PC-3 (cell line): ENCODE measurements at regions of chr14 and their contacts with region 1.

Region 1: DNA sequence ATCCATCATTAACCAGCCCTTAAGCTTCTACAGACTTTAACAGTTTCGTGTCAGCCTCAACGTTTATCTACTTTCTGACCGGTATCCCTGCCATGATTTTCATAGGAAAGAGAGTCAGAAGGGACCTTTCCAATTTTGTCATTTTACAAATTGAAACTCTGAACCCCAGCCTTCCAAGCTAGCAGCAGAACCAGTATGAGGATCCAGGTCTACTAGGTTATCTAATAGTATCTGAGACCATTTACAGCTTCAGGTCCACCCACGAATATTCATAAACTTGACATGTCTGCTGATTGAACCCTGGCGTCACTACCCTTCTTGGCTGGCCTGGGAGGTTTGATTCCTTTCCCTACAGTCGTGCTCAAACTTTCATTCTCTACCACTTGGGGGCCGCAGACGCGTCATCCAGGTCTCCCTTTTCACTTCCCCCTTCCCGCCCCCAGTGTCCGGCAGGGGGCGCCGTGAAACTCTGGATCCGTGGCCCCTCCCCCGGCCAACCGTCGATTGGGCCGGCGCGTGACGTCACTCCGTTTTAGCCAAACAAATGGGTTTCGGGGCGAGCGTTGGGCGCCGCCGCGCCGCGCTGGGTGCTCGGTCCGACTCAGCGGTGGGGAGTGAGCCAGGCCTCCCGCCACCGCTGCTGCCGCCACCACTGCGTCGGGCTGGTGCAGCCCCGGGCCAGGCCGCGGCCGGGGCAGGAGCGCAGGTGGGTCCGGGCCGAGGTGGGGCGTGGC is at the start of gene FBXO34:
- DNase-seq: peak; percentile 100
- ATAC-seq: peak; percentile 89
- H3K4me3 ChIP-seq: peak within 1 kb of the TSS; percentile 94
- H3K27ac ChIP-seq: peak within 1 kb of the TSS; percentile 15
- H3K4me1 ChIP-seq: peaks cover 33% of the 10 kb centered on the region
- H3K27me3 ChIP-seq: no peaks in the 10 kb centered on the region
- CTCF ChIP-seq: peak; percentile 100
- total RNA-seq, gene FBXO34: 33.6 and 35.9 TPM in 2 replicates

Region 2: GRCh38 chr14:55212634-55213033 is 58.4 kb before region 1 on chr14:
- CTCF ChIA-PET with region 1: no interaction called
- POLR2A ChIA-PET with region 1: no interaction called
- intact Hi-C with region 1: loop called (anchors 1 kb)
- DNase-seq: no peak
- ATAC-seq: peak; percentile 12; the same call in 1 of the 2 replicates
- H3K4me3 ChIP-seq: no peak overlapping the region
- H3K27ac ChIP-seq: no peak overlapping the region
- H3K4me1 ChIP-seq: no peaks in the 10 kb centered on the region
- H3K27me3 ChIP-seq: 0 out of 2 replicates have a peak, but pooled peaks cover under 1% of the 10 kb centered on the region
- CTCF ChIP-seq: no peak

Region 3: GRCh38 chr14:55228261-55228660 is 42.7 kb before region 1 on chr14:
- CTCF ChIA-PET with region 1: no interaction called
- POLR2A ChIA-PET with region 1: no interaction called
- intact Hi-C with region 1: no loop called
- DNase-seq: no peak
- ATAC-seq: no peak
- H3K4me3 ChIP-seq: no peak overlapping the region
- H3K27ac ChIP-seq: no peak overlapping the region
- H3K4me1 ChIP-seq: no peaks in the 10 kb centered on the region
- H3K27me3 ChIP-seq: peaks cover 2% of the 10 kb centered on the region
- CTCF ChIP-seq: no peak

Region 4: GRCh38 chr14:55354500-55354899 is 83.5 kb after region 1 on chr14:
- CTCF ChIA-PET with region 1: interaction called, 4 read pairs
- POLR2A ChIA-PET with region 1: no interaction called
- intact Hi-C with region 1: loop called (anchors 1 kb)
- DNase-seq: peak; percentile 63
- ATAC-seq: peak; percentile 43
- H3K4me3 ChIP-seq: no peak overlapping the region
- H3K27ac ChIP-seq: peak overlapping the region; percentile 86
- H3K4me1 ChIP-seq: peaks cover 61% of the 10 kb centered on the region
- H3K27me3 ChIP-seq: no peaks in the 10 kb centered on the region
- CTCF ChIP-seq: peak; percentile 86

Region 5: DNA sequence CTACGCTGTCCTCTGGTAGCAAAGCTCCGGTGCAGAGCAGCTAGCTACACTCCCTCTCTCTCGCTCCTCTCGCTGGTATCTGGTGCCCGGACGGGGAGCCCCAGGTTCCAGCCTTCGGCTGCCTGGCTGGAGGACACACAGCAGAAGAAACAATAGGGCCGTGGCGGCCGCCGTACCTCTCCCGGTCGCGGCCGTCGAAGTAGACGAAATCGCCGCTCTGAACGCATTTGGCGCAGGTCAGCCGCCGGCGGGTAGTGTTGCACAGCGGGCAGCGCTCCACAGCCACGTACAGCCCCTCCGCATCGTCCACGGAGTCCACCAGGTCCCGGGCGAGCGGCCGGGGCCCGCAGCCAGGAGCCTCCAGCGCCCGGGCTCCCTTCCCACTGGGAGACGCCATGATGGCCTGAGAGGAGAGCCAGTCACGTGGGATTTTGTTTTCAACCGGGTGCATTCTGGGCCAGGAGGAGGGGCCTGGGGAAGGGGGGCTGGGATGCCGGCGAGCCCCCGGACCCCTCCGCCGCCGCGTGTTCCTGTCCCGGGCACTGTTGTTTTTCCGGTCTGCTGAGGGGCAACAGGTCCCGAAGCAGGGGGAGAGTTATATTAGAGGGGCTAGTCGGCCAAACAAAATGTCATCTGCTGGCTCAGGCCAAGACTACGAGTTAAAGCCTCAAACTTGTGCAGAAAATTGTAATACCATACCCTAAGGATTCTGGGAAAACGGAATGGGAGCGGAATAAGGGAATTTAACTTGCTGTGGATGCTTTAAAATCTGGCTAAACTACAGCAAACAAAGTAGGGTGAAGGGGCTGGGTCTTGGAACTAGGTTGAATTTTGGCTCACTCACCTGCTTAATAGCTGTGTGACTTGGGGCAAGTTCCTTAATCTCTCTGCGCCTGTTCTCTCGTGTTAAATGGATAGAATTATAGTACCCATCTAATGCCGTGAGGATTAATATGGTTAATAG is 140.7 kb after region 1 on chr14 and contains the start of gene ATG14:
- CTCF ChIA-PET with region 1: interaction called, 4 read pairs
- POLR2A ChIA-PET with region 1: no interaction called
- intact Hi-C with region 1: loop called (anchors 1 kb)
- DNase-seq: peak; percentile 94
- ATAC-seq: peak; percentile 93
- H3K4me3 ChIP-seq: peak within 1 kb of the TSS; percentile 80
- H3K27ac ChIP-seq: peak within 1 kb of the TSS; percentile 71
- H3K4me1 ChIP-seq: peaks cover 33% of the 10 kb centered on the region
- H3K27me3 ChIP-seq: no peaks in the 10 kb centered on the region
- CTCF ChIP-seq: no peak
- total RNA-seq, gene ATG14: 20.2 and 22.5 TPM in 2 replicates

Region 6: GRCh38 chr14:56474419-56475022 is 1203.5 kb after region 1 on chr14:
- CTCF ChIA-PET with region 1: no interaction called
- POLR2A ChIA-PET with region 1: no interaction called
- intact Hi-C with region 1: loop called (anchors 1 kb)
- DNase-seq: peak; percentile 93
- ATAC-seq: peak; percentile 71
- H3K4me3 ChIP-seq: no peak overlapping the region
- H3K27ac ChIP-seq: no peak overlapping the region
- H3K4me1 ChIP-seq: no peaks in the 10 kb centered on the region
- H3K27me3 ChIP-seq: peaks cover 69% of the 10 kb centered on the region
- CTCF ChIP-seq: peak; percentile 98